Body of pancreas (tissue), 4 donors: ENCODE measurements at regions of chr10 and their contacts with region 1.

Region 1: GRCh38 chr10:4649886-4650508 is 176.0 kb upstream of the AKR1E2 start:
- DNase-seq: no peak
- ATAC-seq: no peak
- H3K4me3 ChIP-seq: no peak overlapping the region
- H3K27ac ChIP-seq: no peak overlapping the region
- H3K4me1 ChIP-seq: no peaks in the 10 kb centered on the region
- H3K27me3 ChIP-seq: no peaks in the 10 kb centered on the region
- CTCF ChIP-seq: no peak
- POLR2A ChIP-seq: no peak

Region 2: GRCh38 chr10:3248888-3249758 is 1400.9 kb before region 1 on chr10:
- intact Hi-C with region 1: loop called (anchors 10 kb)
- DNase-seq: peak in 1 of 4 donors; percentile 25
- ATAC-seq: peak; percentile 68
- H3K4me3 ChIP-seq: no peak overlapping the region
- H3K27ac ChIP-seq: peak overlapping the region in 3 of 4 donors; percentile 39 to 69 (median 41)
- H3K4me1 ChIP-seq: no peaks in the 10 kb centered on the region
- H3K27me3 ChIP-seq: no peaks in the 10 kb centered on the region
- CTCF ChIP-seq: no peak
- POLR2A ChIP-seq: no peak

Region 3: DNA sequence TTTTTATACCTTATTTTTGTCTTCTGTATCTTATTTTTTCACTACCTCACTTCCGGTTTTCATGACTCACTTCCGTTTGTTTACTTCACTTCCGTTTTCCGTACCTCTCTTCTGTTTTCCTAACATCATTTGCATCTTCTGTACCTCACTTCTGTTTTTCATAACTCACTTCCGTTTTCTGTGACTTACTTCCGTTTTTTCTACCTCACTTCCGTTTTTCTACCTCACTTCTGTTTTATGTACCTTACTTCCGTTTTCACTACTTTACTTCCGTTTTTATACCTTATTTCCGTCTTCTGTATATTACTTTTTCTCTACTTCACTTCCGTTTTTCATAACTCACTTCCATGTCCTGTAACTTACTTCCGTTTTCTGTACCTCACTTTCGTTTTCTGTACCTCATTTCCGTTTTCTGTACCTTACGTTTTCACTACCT is 316.5 kb before region 1 on chr10:
- intact Hi-C with region 1: no loop called
- DNase-seq: no peak
- ATAC-seq: no peak
- H3K4me3 ChIP-seq: no peak overlapping the region
- H3K27ac ChIP-seq: no peak overlapping the region
- H3K4me1 ChIP-seq: no peaks in the 10 kb centered on the region
- H3K27me3 ChIP-seq: no peaks in the 10 kb centered on the region
- CTCF ChIP-seq: no peak
- POLR2A ChIP-seq: no peak